Ascending aorta (tissue), 2 donors: ENCODE measurements at regions of chr14 and their contacts with region 1.

Region 1: GRCh38 chr14:24195191-24196070 is at the start of gene TM9SF1:
- DNase-seq: peak; percentile 26 to 94
- H3K4me3 ChIP-seq: peak within 1 kb of the TSS; percentile 81 to 98
- H3K27ac ChIP-seq: peak within 1 kb of the TSS; percentile 97 to 99
- H3K4me1 ChIP-seq: peaks cover 8 to 25% of the 10 kb centered on the region in 2 donors
- H3K27me3 ChIP-seq: no peaks in the 10 kb centered on the region
- CTCF ChIP-seq: no peak
- total RNA-seq, gene TM9SF1: 86.5 TPM

Region 2: GRCh38 chr14:24215495-24216344 is 20.3 kb after region 1 on chr14 and contains the start of gene MDP1:
- intact Hi-C with region 1: loop called (anchors 1 kb)
- DNase-seq: peak; percentile 53 to 92
- H3K4me3 ChIP-seq: peak within 1 kb of the TSS; percentile 84 to 88
- H3K27ac ChIP-seq: peak within 1 kb of the TSS; percentile 87 to 93
- H3K4me1 ChIP-seq: peaks cover 3 to 29% of the 10 kb centered on the region in 2 donors
- H3K27me3 ChIP-seq: no peaks in the 10 kb centered on the region
- CTCF ChIP-seq: peak in 2 of 3 experiments; percentile 44 to 60
- total RNA-seq, gene MDP1: 58.8 TPM